Activated CD8-positive, alpha-beta T cell treated with anti-CD3 and anti-CD28 coated beads for 36 hours (primary cell): ENCODE measurements at regions of chr1 and their contacts with region 1.

Region 1: GRCh38 chr1:198638894-198639635 is at the start of gene PTPRC:
- DNase-seq: no peak
- ATAC-seq: peak; percentile 57
- H3K4me3 Mint-ChIP-seq: peak within 1 kb of the TSS; percentile 86
- H3K27ac Mint-ChIP-seq: peak within 1 kb of the TSS; percentile 97
- H3K4me1 Mint-ChIP-seq: peaks cover 39% of the 10 kb centered on the region
- H3K27me3 Mint-ChIP-seq: no peaks in the 10 kb centered on the region
- CTCF ChIP-seq: no peak
- total RNA-seq, gene PTPRC: 475 to 499 TPM

Region 2: GRCh38 chr1:198598796-198599321 is 40.2 kb before region 1 on chr1:
- CTCF ChIA-PET with region 1: no interaction called
- POLR2A ChIA-PET with region 1: no interaction called
- intact Hi-C with region 1: loop called (anchors 5 kb)
- DNase-seq: peak; percentile 58
- ATAC-seq: peak; percentile 64
- H3K4me3 Mint-ChIP-seq: peak overlapping the region; percentile 14
- H3K27ac Mint-ChIP-seq: peak overlapping the region; percentile 90
- H3K4me1 Mint-ChIP-seq: peaks cover 82% of the 10 kb centered on the region
- H3K27me3 Mint-ChIP-seq: no peaks in the 10 kb centered on the region
- CTCF ChIP-seq: no peak

Region 3: GRCh38 chr1:198657550-198658064 is 18.5 kb after region 1 on chr1:
- CTCF ChIA-PET with region 1: interaction called, 3 read pairs
- POLR2A ChIA-PET with region 1: interaction called, 41 read pairs
- intact Hi-C with region 1: loop called (anchors 2 kb)
- DNase-seq: peak; percentile 52
- ATAC-seq: peak; percentile 40
- H3K4me3 Mint-ChIP-seq: peak overlapping the region; percentile 71
- H3K27ac Mint-ChIP-seq: peak overlapping the region; percentile 96
- H3K4me1 Mint-ChIP-seq: peaks cover 64% of the 10 kb centered on the region
- H3K27me3 Mint-ChIP-seq: no peaks in the 10 kb centered on the region
- CTCF ChIP-seq: no peak

Region 4: DNA sequence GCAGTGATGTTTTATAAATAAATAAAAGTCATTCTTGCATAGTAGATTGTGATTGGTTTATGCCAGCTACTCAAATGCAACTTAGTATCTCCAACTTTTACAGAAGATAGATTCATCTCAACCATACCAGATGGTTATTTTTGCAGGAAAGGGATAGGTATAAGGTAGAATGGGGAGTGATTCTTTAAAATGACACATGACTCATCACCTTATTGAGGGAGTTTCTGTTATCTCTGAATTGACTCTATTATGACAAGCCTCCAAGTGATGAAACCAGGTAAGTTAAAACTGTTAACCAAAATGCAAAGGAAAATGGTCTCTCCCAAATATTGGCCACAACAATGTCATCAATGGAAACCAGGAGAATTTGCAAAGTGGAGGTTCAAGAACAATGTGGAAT is 54.3 kb after region 1 on chr1:
- CTCF ChIA-PET with region 1: no interaction called
- POLR2A ChIA-PET with region 1: no interaction called
- intact Hi-C with region 1: no loop called
- DNase-seq: no peak
- ATAC-seq: peak; percentile 76
- H3K4me3 Mint-ChIP-seq: peak overlapping the region; percentile 6
- H3K27ac Mint-ChIP-seq: peak overlapping the region; percentile 87
- H3K4me1 Mint-ChIP-seq: peaks cover 82% of the 10 kb centered on the region
- H3K27me3 Mint-ChIP-seq: no peaks in the 10 kb centered on the region
- CTCF ChIP-seq: no peak

Region 5: GRCh38 chr1:198776602-198777029 is 137.6 kb after region 1 on chr1:
- CTCF ChIA-PET with region 1: no interaction called
- POLR2A ChIA-PET with region 1: no interaction called
- intact Hi-C with region 1: no loop called
- DNase-seq: no peak
- ATAC-seq: no peak
- H3K4me3 Mint-ChIP-seq: no peak overlapping the region
- H3K27ac Mint-ChIP-seq: no peak overlapping the region
- H3K4me1 Mint-ChIP-seq: peaks cover 8% of the 10 kb centered on the region
- H3K27me3 Mint-ChIP-seq: peaks cover 2% of the 10 kb centered on the region
- CTCF ChIP-seq: no peak